ENCODE measurements at regions of chr1 and their contacts with region 1.

Region 1: DNA sequence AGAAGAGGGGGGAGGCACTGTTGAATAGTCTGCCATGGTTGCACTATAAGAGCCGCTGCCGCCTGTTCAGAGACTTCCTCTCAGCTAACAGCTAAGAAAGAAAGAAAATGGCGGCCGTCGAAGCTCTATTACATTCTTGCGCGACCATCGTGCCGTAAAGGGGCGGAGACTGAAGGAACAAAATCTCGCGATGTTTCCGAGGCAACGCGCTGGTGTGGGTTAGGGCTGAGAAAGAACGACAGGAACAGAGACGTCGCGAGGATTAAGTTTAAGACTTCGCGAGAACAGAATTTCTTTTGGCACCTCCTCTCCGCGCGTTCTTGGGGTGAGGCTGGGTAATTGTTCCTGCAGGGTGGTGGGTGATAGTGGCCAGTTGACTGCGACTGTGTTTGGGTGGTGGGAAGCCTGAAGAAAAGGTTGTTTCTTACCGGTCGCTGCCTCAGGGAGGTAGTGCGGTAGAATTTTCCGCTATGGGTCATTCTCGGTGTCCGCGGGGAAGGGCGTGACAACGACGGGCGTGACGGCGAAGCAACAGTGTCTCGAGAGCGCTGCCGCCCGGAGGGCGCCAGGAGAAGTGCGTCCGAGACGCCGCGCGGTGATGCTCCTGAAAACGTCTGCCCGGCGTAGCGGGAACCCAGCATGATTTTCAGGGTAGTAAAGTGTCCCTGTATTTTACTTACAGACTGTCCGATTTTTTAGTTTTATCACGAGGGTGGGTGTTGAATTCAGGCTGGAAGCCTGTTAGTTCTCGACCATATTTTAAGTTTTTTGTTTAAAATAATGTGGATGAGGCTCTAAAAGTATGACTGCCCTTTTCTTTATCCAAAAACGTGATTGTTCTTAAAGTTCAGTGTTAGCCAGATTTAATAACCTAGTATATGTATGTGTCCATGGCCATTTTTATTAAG is at the start of gene FUBP1:
- DNase-seq: peak; percentile 81 to 98 (median 97)
- ATAC-seq: peak; percentile 84
- H3K4me3 ChIP-seq: peak within 1 kb of the TSS; percentile 99
- H3K4me3 Mint-ChIP-seq: no peak within 1 kb of the TSS
- H3K27ac ChIP-seq: peak within 1 kb of the TSS; percentile 97
- H3K27ac Mint-ChIP-seq: no peak within 1 kb of the TSS
- H3K4me1 ChIP-seq: peaks cover 31 to 38% of the 10 kb centered on the region in 2 donors
- H3K4me1 Mint-ChIP-seq: peaks cover 28 to 54% (median 39%) of the 10 kb centered on the region in 7 donors
- H3K27me3 ChIP-seq: no peaks in the 10 kb centered on the region
- H3K27me3 Mint-ChIP-seq: no peaks in the 10 kb centered on the region
- total RNA-seq, gene FUBP1: 182 to 253 (median 224) TPM

Region 2: GRCh38 chr1:77438236-77438913 is 540.8 kb before region 1 on chr1:
- CTCF ChIA-PET with region 1: no interaction called
- POLR2A ChIA-PET with region 1: interaction called, 3 read pairs
- intact Hi-C with region 1: loop called in 1 of 2 experiments (anchors 10 kb)
- DNase-seq: no peak
- ATAC-seq: no peak
- H3K4me3 ChIP-seq: peak overlapping the region; percentile 20
- H3K4me3 Mint-ChIP-seq: peak overlapping the region; percentile 39 to 80 (median 74)
- H3K27ac ChIP-seq: no peak overlapping the region
- H3K27ac Mint-ChIP-seq: peak overlapping the region in 8 of 9 donors; percentile 49 to 90 (median 83)
- H3K4me1 ChIP-seq: peaks cover 0 to 34% of the 10 kb centered on the region in 2 donors
- H3K4me1 Mint-ChIP-seq: peaks cover 25 to 72% (median 54%) of the 10 kb centered on the region in 7 donors
- H3K27me3 ChIP-seq: no peaks in the 10 kb centered on the region
- H3K27me3 Mint-ChIP-seq: no peaks in the 10 kb centered on the region

Region 3: GRCh38 chr1:77779529-77780281 is 199.5 kb before region 1 on chr1 and contains the start of gene MIGA1:
- CTCF ChIA-PET with region 1: no interaction called
- POLR2A ChIA-PET with region 1: interaction called, 22 read pairs
- intact Hi-C with region 1: loop called (anchors 1 kb)
- DNase-seq: peak; percentile 61 to 92 (median 86)
- ATAC-seq: peak; percentile 99
- H3K4me3 ChIP-seq: peak within 1 kb of the TSS; percentile 68
- H3K4me3 Mint-ChIP-seq: peak within 1 kb of the TSS; percentile 90 to 98 (median 94)
- H3K27ac ChIP-seq: peak within 1 kb of the TSS; percentile 87
- H3K27ac Mint-ChIP-seq: peak within 1 kb of the TSS; percentile 88 to 96 (median 93)
- H3K4me1 ChIP-seq: peaks cover 11 to 15% of the 10 kb centered on the region in 2 donors
- H3K4me1 Mint-ChIP-seq: peaks cover 21 to 54% (median 49%) of the 10 kb centered on the region in 7 donors
- H3K27me3 ChIP-seq: no peaks in the 10 kb centered on the region
- H3K27me3 Mint-ChIP-seq: peaks cover 0 to 3% (median 0%) of the 10 kb centered on the region in 5 donors
- total RNA-seq, gene MIGA1: 12.1 to 23.5 (median 15.9) TPM

Region 4: DNA sequence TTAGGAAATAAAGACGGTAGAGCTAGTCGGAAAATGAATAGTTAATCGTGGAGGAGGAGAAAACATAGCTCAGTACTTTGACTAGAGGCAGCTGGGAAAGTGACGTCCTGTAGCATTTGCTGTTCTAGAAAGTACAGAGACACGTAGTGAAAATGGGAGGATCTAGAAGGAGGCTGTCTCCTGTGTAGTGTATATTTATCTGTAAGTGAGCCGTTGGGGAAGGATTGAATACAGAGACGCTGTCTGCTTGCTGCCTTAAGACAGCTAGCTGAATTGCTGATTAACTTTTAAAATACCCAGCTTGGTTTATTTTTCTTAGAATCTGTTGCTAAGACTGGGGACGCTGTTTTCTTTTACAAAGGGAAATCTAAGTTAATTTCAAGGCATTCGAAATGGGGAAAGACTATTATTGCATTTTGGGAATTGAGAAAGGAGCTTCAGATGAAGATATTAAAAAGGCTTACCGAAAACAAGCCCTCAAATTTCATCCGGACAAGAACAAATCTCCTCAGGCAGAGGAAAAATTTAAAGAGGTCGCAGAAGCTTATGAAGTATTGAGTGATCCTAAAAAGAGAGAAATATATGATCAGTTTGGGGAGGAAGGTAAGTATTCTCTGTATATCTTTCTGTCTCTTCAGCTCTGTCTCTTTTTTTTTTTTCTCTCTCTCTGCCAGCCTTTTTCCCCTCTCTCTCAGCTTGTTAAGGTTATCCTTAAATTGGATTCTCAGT is 25.7 kb after region 1 on chr1 and contains the start of gene DNAJB4:
- CTCF ChIA-PET with region 1: interaction called, 12 read pairs
- POLR2A ChIA-PET with region 1: interaction called, 324 read pairs
- intact Hi-C with region 1: loop called (anchors 1 kb)
- DNase-seq: peak in 8 of 9 donors; percentile 30 to 92 (median 87)
- ATAC-seq: peak; percentile 99
- H3K4me3 ChIP-seq: peak within 1 kb of the TSS; percentile 57
- H3K4me3 Mint-ChIP-seq: peak within 1 kb of the TSS; percentile 87 to 99 (median 92)
- H3K27ac ChIP-seq: peak within 1 kb of the TSS; percentile 95
- H3K27ac Mint-ChIP-seq: peak within 1 kb of the TSS; percentile 92 to 100 (median 99)
- H3K4me1 ChIP-seq: peaks cover 8 to 17% of the 10 kb centered on the region in 2 donors
- H3K4me1 Mint-ChIP-seq: peaks cover 9 to 57% (median 53%) of the 10 kb centered on the region in 7 donors
- H3K27me3 ChIP-seq: no peaks in the 10 kb centered on the region
- H3K27me3 Mint-ChIP-seq: peaks cover 0 to 3% (median 0%) of the 10 kb centered on the region in 5 donors
- total RNA-seq, gene DNAJB4: 11.4 to 20.1 (median 18.2) TPM

Region 5: GRCh38 chr1:78114034-78114956 is 135.1 kb after region 1 on chr1:
- CTCF ChIA-PET with region 1: interaction called, 6 read pairs
- POLR2A ChIA-PET with region 1: interaction called, 6 read pairs
- intact Hi-C with region 1: loop called (anchors 1 kb)
- DNase-seq: peak; percentile 15 to 71 (median 58)
- ATAC-seq: peak; percentile 93
- H3K4me3 ChIP-seq: no peak overlapping the region
- H3K4me3 Mint-ChIP-seq: no peak overlapping the region
- H3K27ac ChIP-seq: no peak overlapping the region
- H3K27ac Mint-ChIP-seq: no peak overlapping the region
- H3K4me1 ChIP-seq: no peaks in the 10 kb centered on the region
- H3K4me1 Mint-ChIP-seq: peaks cover 0 to 9% (median 0%) of the 10 kb centered on the region in 7 donors
- H3K27me3 ChIP-seq: no peaks in the 10 kb centered on the region
- H3K27me3 Mint-ChIP-seq: peaks cover 0 to 2% (median 0%) of the 10 kb centered on the region in 5 donors

Region 6: DNA sequence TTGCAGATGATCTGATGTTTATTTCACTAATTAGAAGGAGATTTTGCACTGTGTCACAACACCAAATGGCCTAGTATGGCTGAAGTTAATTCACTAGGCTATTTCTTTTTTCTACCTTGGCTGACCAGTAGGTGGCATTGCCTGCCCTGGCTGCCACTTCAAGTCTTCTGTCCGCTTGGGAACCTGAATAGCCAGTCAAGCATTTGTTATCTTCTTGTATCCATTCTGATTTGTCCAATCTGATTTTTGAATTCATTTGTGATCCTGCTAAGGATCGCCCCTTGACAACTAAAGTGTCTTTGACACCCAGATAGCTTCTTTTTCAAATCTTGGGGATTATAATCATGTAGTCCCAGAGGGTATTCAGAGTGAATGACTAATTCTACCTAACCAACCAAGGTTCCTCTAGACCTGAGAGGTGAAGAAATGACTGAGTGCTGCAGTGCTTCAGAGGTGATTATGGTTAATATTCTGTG is 165.9 kb after region 1 on chr1:
- CTCF ChIA-PET with region 1: no interaction called
- POLR2A ChIA-PET with region 1: no interaction called
- intact Hi-C with region 1: no loop called
- DNase-seq: peak in 5 of 9 donors; percentile 22 to 36 (median 31)
- ATAC-seq: peak; percentile 73
- H3K4me3 ChIP-seq: no peak overlapping the region
- H3K4me3 Mint-ChIP-seq: no peak overlapping the region
- H3K27ac ChIP-seq: no peak overlapping the region
- H3K27ac Mint-ChIP-seq: peak overlapping the region in 1 of 9 donors; percentile 50
- H3K4me1 ChIP-seq: peaks cover 0 to 4% of the 10 kb centered on the region in 2 donors
- H3K4me1 Mint-ChIP-seq: peaks cover 5 to 27% (median 11%) of the 10 kb centered on the region in 7 donors
- H3K27me3 ChIP-seq: no peaks in the 10 kb centered on the region
- H3K27me3 Mint-ChIP-seq: peaks cover 5 to 23% (median 15%) of the 10 kb centered on the region in 5 donors

Region 7: DNA sequence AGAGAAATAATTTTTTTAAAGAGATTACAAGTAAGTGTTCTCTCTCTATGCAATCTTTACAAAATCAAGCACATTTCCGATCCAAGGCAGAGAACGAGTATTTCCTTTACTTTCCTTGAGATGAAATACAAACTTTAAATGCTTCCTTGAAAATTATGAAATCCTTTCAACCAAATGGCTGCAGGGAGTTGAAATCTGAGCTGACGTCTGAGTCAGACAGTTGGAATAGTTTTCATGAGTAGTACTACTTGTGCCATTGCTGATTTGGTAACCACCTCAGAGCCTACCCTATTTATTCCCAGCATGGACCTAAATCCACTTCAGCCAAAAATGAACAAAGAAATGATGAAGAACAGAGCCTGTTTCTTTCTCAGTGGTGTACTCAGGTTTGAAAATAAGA is 250.1 kb after region 1 on chr1:
- CTCF ChIA-PET with region 1: no interaction called
- POLR2A ChIA-PET with region 1: no interaction called
- intact Hi-C with region 1: no loop called
- DNase-seq: no peak
- ATAC-seq: no peak
- H3K4me3 ChIP-seq: no peak overlapping the region
- H3K4me3 Mint-ChIP-seq: no peak overlapping the region
- H3K27ac ChIP-seq: no peak overlapping the region
- H3K27ac Mint-ChIP-seq: no peak overlapping the region
- H3K4me1 ChIP-seq: no peaks in the 10 kb centered on the region
- H3K4me1 Mint-ChIP-seq: no peaks in the 10 kb centered on the region
- H3K27me3 ChIP-seq: no peaks in the 10 kb centered on the region
- H3K27me3 Mint-ChIP-seq: peaks cover 0 to 28% (median 15%) of the 10 kb centered on the region in 5 donors

Region 8: GRCh38 chr1:78649628-78650027 is 670.4 kb after region 1 on chr1 and contains the start of gene IFI44:
- CTCF ChIA-PET with region 1: no interaction called
- POLR2A ChIA-PET with region 1: interaction called, 4 read pairs
- intact Hi-C with region 1: loop called in 1 of 2 experiments (anchors 1 kb)
- DNase-seq: peak; percentile 22 to 83 (median 79)
- ATAC-seq: peak; percentile 91
- H3K4me3 ChIP-seq: peak within 1 kb of the TSS; percentile 68
- H3K4me3 Mint-ChIP-seq: peak within 1 kb of the TSS; percentile 81 to 100 (median 92)
- H3K27ac ChIP-seq: peak within 1 kb of the TSS; percentile 67
- H3K27ac Mint-ChIP-seq: peak within 1 kb of the TSS; percentile 82 to 97 (median 93)
- H3K4me1 ChIP-seq: peaks cover 36 to 40% of the 10 kb centered on the region in 2 donors
- H3K4me1 Mint-ChIP-seq: peaks cover 39 to 80% (median 64%) of the 10 kb centered on the region in 7 donors
- H3K27me3 ChIP-seq: no peaks in the 10 kb centered on the region
- H3K27me3 Mint-ChIP-seq: no peaks in the 10 kb centered on the region
- total RNA-seq, gene IFI44: 24.3 to 142 (median 33.1) TPM

Measured in naive thymus-derived CD4-positive, alpha-beta T cell (primary cell).